Right ventricle myocardium superior (tissue), 1 donor: ENCODE measurements at regions of chr7 and their contacts with region 1.

Region 1: DNA sequence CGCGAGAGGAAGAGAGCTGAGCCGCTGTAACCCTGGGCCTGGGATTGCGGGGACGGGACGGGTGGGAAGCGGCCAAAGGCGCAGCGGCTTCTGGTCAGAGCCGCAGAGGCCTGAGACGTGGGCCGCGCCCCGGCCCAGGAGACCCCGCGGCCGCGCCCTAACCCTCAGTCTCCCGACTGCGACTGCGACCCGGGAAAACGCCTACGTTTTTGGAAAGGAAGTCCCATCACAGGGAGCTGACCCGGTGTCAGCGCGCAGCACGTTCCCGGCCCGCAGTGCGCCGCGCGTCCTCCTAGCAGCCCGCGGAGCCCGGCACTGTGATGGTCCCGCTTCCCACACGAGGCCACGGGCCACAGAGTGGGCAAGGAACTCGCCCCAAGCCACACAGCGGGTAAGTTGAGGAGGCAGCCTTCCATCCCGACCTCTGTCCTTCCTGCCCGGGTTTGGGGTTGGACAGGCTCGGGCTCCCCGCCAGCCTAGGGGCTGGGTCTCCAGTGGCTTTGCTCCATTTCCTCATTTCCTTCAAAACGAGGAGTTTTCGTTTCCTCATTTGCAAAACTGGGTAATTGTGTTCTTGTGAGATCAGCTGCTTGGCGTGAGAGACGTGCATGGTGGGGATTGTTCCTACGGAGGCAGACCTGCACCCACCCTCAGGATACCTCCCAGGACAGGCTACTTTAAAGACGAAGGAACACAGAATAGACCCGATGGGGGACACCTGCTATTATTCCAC is 1.2 kb downstream of the GPNMB start:
- DNase-seq: peak; percentile 74
- ATAC-seq: peak; percentile 80

Region 2: DNA sequence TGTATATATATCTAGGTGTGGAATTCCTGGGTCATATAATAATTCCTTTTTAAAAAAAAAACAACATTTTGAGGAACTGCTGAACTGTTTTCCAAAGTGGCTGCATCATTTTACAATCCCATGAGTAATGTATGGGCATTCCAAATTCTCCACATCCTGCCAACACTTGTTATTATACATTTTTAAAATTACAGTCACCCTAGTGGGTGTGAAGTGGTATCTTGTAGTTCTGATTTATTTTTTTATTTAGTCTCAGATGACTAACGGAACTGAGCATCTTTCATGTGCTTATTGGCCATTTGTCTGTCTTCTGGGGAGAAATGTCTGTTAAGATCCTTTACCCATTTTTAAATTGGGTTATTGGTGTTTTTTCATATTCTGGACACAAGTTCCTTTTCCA is 154.2 kb before region 1 on chr7:
- intact Hi-C with region 1: no loop called
- DNase-seq: no peak
- ATAC-seq: no peak

Region 3: GRCh38 chr7:23105644-23106056 is 142.1 kb before region 1 on chr7 and contains the start of gene KLHL7:
- intact Hi-C with region 1: loop called (anchors 10 kb)
- DNase-seq: peak; percentile 99
- ATAC-seq: peak; percentile 97
- total RNA-seq, gene KLHL7: 167 TPM

Region 4: DNA sequence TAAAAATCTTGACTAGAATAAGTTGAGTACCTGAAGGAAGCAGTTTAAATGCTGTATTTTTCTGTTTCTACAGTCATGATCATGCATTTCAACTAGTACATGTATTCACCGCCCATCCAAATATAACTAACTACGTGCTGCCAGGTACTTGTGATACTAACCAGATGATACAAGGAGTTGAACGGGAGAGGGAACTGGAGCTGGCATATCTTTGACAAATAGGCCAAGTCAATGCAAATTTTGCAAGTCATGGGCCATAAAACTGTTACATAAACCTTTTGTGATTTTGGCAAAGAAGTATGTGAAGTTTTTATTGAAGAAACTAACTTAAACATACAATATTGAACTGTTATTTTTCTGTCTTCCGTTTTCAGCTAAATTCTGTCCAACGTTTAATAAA is 51.5 kb before region 1 on chr7:
- intact Hi-C with region 1: loop called (anchors 5 kb)
- DNase-seq: no peak
- ATAC-seq: peak; percentile 87